ENCODE measurements at regions of chr3 and their contacts with region 1.

Region 1: GRCh38 chr3:120705851-120706582 is 24.0 kb upstream of the HGD start:
- H3K4me3 Mint-ChIP-seq: no peak overlapping the region
- H3K27ac Mint-ChIP-seq: no peak overlapping the region
- H3K4me1 Mint-ChIP-seq: no peaks in the 10 kb centered on the region
- H3K27me3 Mint-ChIP-seq: no peaks in the 10 kb centered on the region

Region 2: DNA sequence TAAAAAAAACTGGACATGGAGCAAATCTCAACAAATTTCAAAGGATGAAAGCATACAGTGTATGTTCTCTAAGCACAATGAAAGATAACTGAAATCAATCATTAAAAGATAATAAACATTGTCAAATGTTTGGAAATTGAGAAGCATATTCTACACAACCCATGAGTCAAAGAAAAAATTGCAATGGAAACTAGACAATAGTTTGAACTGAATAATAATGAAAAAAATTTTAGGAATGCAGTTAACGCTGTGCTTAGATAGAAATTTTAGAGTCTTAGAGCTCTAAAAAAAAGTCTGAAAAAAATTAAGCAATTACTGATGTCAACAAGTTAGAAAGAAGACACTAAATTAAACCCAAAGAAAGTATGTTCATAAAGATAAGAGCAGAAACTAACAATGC is 20.8 kb after region 1 on chr3:
- intact Hi-C with region 1: loop called (anchors 1 kb)
- H3K4me3 Mint-ChIP-seq: no peak overlapping the region
- H3K27ac Mint-ChIP-seq: no peak overlapping the region
- H3K4me1 Mint-ChIP-seq: peaks cover 5% of the 10 kb centered on the region
- H3K27me3 Mint-ChIP-seq: no peaks in the 10 kb centered on the region

Measured in dendritic cell treated with granulocyte-macrophage colony-stimulating factor and Interleukin-4, amounts not matched to agents 40 ng/mL and 50 ng/mL, for 4 days (primary cell).